Activated CD8-positive, alpha-beta T cell treated with anti-CD3 and anti-CD28 coated beads for 36 hours (primary cell): ENCODE measurements at regions of chr1 and their contacts with region 1.

Region 1: DNA sequence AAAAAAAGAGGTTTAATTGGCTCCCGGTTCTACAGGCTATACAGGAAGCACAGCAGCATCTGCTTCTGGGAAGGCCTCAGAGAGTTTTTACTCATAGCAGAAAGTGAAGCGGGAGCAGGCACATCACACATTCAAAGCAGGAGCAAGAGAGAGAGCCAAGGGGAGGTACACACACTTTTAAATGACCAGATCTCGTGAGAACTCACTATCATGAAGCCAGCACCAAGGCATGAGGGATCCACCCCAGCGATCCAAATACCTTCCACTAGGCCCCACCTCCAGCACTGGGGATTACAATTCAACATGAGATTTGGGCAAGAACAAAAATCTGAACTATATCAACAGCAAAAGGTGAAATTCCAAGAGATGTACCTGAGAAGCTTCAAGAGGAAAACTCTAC is 20.8 kb upstream of the FAM76A start:
- DNase-seq: no peak
- ATAC-seq: no peak
- H3K4me3 Mint-ChIP-seq: no peak overlapping the region
- H3K27ac Mint-ChIP-seq: no peak overlapping the region
- H3K4me1 Mint-ChIP-seq: no peaks in the 10 kb centered on the region
- H3K27me3 Mint-ChIP-seq: peaks cover 2% of the 10 kb centered on the region
- CTCF ChIP-seq: no peak

Region 2: DNA sequence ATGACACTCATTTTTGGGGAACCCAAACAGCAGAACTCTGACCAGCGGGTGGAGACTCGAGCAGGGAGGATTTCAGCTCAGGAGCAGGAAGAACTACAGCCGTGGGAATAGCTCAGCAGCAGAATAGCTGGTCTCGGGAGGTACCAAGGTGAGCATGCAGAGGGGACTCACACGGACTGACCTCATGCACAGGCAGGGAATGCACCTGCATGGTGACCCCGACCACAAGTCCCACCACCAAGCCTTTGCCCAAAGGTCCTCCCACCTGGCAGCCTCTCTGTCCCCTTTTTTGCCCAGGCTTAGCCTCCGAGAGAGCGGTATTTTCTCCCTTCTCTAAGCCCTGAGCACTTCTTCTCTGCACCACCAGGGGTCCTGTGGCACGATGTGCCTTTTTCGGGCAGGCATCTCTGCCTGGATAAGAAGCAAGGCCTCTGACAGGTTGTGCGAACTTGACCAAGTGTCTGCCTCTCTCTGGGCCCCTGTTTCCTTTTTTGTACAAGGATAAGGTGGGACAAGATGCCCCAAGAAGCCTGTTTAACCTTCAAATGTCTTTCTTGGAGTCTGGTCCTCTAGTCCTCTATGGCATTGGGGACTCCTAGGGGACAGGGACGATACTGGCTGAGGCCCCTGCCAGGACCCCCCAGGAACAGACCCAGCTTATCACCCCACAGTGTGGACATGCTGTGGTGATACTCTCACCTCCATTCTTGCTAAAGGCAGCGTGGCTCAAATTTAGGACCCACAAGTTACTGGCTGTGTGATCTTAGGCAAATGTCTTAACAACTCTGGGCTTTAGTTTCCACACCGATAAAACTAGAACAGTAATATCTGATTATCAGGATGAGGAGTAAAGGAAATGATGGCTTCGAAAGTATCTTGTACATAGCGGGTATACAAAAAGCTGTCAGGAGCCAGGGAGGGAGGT is 61.0 kb before region 1 on chr1:
- CTCF ChIA-PET with region 1: no interaction called
- POLR2A ChIA-PET with region 1: no interaction called
- intact Hi-C with region 1: loop called (anchors 10 kb)
- DNase-seq: peak; percentile 81
- ATAC-seq: peak; percentile 99
- H3K4me3 Mint-ChIP-seq: no peak overlapping the region
- H3K27ac Mint-ChIP-seq: peak overlapping the region; percentile 42
- H3K4me1 Mint-ChIP-seq: peaks cover 14% of the 10 kb centered on the region
- H3K27me3 Mint-ChIP-seq: no peaks in the 10 kb centered on the region
- CTCF ChIP-seq: peak; percentile 91

Region 3: GRCh38 chr1:27816921-27817630 is 112.1 kb after region 1 on chr1:
- CTCF ChIA-PET with region 1: no interaction called
- POLR2A ChIA-PET with region 1: no interaction called
- intact Hi-C with region 1: no loop called
- DNase-seq: no peak
- ATAC-seq: no peak
- H3K4me3 Mint-ChIP-seq: no peak overlapping the region
- H3K27ac Mint-ChIP-seq: no peak overlapping the region
- H3K4me1 Mint-ChIP-seq: no peaks in the 10 kb centered on the region
- H3K27me3 Mint-ChIP-seq: no peaks in the 10 kb centered on the region
- CTCF ChIP-seq: no peak